ENCODE measurements at regions of chr14 and their contacts with region 1.

Region 1: GRCh38 chr14:61694830-61695694 is at the start of gene HIF1A:
- DNase-seq: peak; percentile 91 to 97
- H3K4me3 ChIP-seq: peak within 1 kb of the TSS; percentile 96 to 100 (median 98)
- H3K27ac ChIP-seq: peak within 1 kb of the TSS; percentile 97
- H3K4me1 ChIP-seq: peaks cover 0 to 6% (median 1%) of the 10 kb centered on the region in 4 experiments; a peak in 4 of 7 replicates
- H3K27me3 ChIP-seq: no peaks in the 10 kb centered on the region
- CTCF ChIP-seq: peak in 2 of 3 experiments; percentile 11 to 22; a peak in 2 of 4 replicates
- EP300 ChIP-seq: no peak
- POLR2A ChIP-seq: peak; percentile 98 to 99
- RAD21 ChIP-seq: peak; percentile 18 to 26; a peak in 2 of 4 replicates
- total RNA-seq, gene HIF1A: 175 and 178 TPM in 2 replicates

Region 2: GRCh38 chr14:61609191-61609843 is 85.7 kb before region 1 on chr14:
- CTCF ChIA-PET with region 1: interaction called, 3 read pairs
- POLR2A ChIA-PET with region 1: interaction called, 23 read pairs
- DNase-seq: peak in 1 of 2 experiments; percentile 46
- H3K4me3 ChIP-seq: peak overlapping the region in 1 of 4 experiments; percentile 21; a peak in 2 of 8 replicates
- H3K27ac ChIP-seq: no peak overlapping the region
- H3K4me1 ChIP-seq: peaks cover 18 to 27% (median 21%) of the 10 kb centered on the region in 4 experiments
- H3K27me3 ChIP-seq: no peaks in the 10 kb centered on the region
- CTCF ChIP-seq: no peak
- EP300 ChIP-seq: 0 out of 3 replicates have a peak, but pooled peaks of 1 of the 2 experiments have one; percentile 13
- POLR2A ChIP-seq: no peak
- RAD21 ChIP-seq: no peak; a peak in 1 of 4 replicates

Region 3: GRCh38 chr14:61681413-61681812 is 13.6 kb before region 1 on chr14:
- CTCF ChIA-PET with region 1: interaction called, 5 read pairs
- POLR2A ChIA-PET with region 1: interaction called, 14 read pairs
- DNase-seq: no peak
- H3K4me3 ChIP-seq: no peak overlapping the region
- H3K27ac ChIP-seq: no peak overlapping the region
- H3K4me1 ChIP-seq: peaks cover 2 to 10% (median 6%) of the 10 kb centered on the region in 4 experiments; a peak in 5 of 7 replicates
- H3K27me3 ChIP-seq: no peaks in the 10 kb centered on the region
- CTCF ChIP-seq: no peak
- EP300 ChIP-seq: no peak
- POLR2A ChIP-seq: no peak
- RAD21 ChIP-seq: no peak

Region 4: GRCh38 chr14:61719344-61720293 is 24.6 kb after region 1 on chr14:
- CTCF ChIA-PET with region 1: interaction called, 7 read pairs
- POLR2A ChIA-PET with region 1: interaction called, 10 read pairs
- DNase-seq: no peak
- H3K4me3 ChIP-seq: no peak overlapping the region
- H3K27ac ChIP-seq: no peak overlapping the region
- H3K4me1 ChIP-seq: peaks cover 2 to 9% (median 4%) of the 10 kb centered on the region in 4 experiments; a peak in 5 of 7 replicates
- H3K27me3 ChIP-seq: no peaks in the 10 kb centered on the region
- CTCF ChIP-seq: no peak
- EP300 ChIP-seq: no peak
- POLR2A ChIP-seq: no peak
- RAD21 ChIP-seq: no peak